H1 (cell line): ENCODE measurements at regions of chr6 and their contacts with region 1.

Region 1: DNA sequence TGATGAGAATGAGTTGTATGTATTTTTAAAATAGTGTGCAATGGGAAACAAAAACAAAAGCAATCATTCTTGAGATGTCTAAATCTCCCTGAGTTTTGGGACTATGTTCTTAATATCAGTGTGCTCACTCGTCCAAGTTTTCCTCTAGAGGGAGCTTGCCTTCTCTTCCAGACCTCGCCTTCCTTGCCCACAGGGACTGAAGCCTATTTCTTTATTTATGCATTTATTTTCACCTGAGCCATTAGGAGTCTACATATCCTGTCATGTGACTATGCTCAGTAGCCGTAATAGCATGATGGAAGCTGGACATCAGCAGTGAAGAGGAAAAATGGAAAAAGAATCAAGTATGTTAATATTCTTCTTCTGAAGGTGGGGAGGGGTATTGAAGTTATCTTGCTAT is 131.2 kb downstream of the SH3BGRL2 start:
- DNase-seq: no peak
- H3K4me3 ChIP-seq: no peak overlapping the region
- H3K27ac ChIP-seq: no peak overlapping the region
- H3K4me1 ChIP-seq: no peaks in the 10 kb centered on the region; a peak in 1 of 7 replicates
- H3K27me3 ChIP-seq: no peaks in the 10 kb centered on the region
- CTCF ChIP-seq: peak; percentile 20 to 60 (median 32); a peak in 3 of 4 replicates
- EP300 ChIP-seq: no peak
- POLR2A ChIP-seq: no peak
- RAD21 ChIP-seq: peak; percentile 36 to 47; a peak in 3 of 4 replicates

Region 2: DNA sequence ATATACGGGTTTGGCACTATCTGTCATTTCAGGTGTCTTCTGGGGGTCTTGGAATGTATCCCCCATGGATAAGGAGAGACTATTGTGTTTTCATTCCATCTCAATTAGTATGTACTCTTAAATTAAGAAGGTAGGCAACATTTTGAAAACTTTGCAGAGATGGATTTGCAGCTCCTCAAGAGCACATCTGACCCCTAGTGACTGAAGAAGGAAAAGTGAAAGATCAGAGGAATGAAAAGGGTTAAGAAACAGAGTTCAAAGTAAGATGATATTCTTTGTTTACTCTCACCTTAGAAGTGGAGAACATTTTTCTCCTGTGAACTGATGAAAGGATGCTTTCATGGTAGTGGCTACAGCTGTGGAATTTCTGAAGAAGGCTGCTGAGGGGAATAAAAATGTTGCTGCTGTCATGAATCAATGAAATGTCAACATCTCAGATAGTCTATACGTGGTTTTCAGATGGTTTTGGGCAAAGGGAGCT is 89.7 kb before region 1 on chr6:
- CTCF ChIA-PET with region 1: interaction called, 10 read pairs
- POLR2A ChIA-PET with region 1: no interaction called
- DNase-seq: no peak
- H3K4me3 ChIP-seq: no peak overlapping the region
- H3K27ac ChIP-seq: no peak overlapping the region
- H3K4me1 ChIP-seq: peaks cover 0 to 5% (median 4%) of the 10 kb centered on the region in 4 experiments; a peak in 5 of 7 replicates
- H3K27me3 ChIP-seq: no peaks in the 10 kb centered on the region
- CTCF ChIP-seq: peak in 2 of 3 experiments; percentile 37 to 62; a peak in 2 of 4 replicates
- EP300 ChIP-seq: no peak
- POLR2A ChIP-seq: no peak
- RAD21 ChIP-seq: peak; percentile 80 to 83

Region 3: DNA sequence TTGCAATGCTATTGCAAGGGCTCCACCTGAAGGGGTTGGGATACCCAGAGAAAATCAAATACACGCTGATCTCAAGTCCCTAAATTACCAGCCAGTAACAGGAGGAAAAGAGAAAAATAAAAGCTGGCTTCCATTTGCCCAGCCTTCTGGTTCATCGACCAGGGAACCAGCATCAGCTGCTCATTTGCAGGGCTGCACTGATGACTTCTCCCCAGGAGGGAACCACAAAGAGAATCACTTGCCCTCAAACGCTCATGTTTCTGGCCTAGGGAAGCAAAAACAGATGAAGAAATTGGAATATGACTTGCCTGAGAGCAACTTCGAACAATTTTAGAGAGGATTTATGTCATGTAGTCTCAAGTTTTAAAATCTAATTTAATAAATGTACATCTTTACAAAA is 11.6 kb before region 1 on chr6:
- CTCF ChIA-PET with region 1: interaction called, 13 read pairs
- POLR2A ChIA-PET with region 1: interaction called, 3 read pairs
- DNase-seq: no peak
- H3K4me3 ChIP-seq: no peak overlapping the region
- H3K27ac ChIP-seq: no peak overlapping the region
- H3K4me1 ChIP-seq: no peaks in the 10 kb centered on the region
- H3K27me3 ChIP-seq: no peaks in the 10 kb centered on the region
- CTCF ChIP-seq: no peak
- EP300 ChIP-seq: no peak
- POLR2A ChIP-seq: no peak
- RAD21 ChIP-seq: no peak

Region 4: GRCh38 chr6:79777713-79778579 is 15.6 kb after region 1 on chr6:
- CTCF ChIA-PET with region 1: interaction called, 72 read pairs
- POLR2A ChIA-PET with region 1: no interaction called
- DNase-seq: peak; percentile 70 to 98
- H3K4me3 ChIP-seq: peak overlapping the region in 1 of 4 experiments; percentile 48; a peak in 4 of 8 replicates
- H3K27ac ChIP-seq: no peak overlapping the region
- H3K4me1 ChIP-seq: peaks cover 0 to 3% (median 1%) of the 10 kb centered on the region in 4 experiments; a peak in 1 of 7 replicates
- H3K27me3 ChIP-seq: no peaks in the 10 kb centered on the region
- CTCF ChIP-seq: peak; percentile 94 to 96 (median 94)
- EP300 ChIP-seq: no peak
- POLR2A ChIP-seq: no peak
- RAD21 ChIP-seq: peak; percentile 82 to 87

Region 5: DNA sequence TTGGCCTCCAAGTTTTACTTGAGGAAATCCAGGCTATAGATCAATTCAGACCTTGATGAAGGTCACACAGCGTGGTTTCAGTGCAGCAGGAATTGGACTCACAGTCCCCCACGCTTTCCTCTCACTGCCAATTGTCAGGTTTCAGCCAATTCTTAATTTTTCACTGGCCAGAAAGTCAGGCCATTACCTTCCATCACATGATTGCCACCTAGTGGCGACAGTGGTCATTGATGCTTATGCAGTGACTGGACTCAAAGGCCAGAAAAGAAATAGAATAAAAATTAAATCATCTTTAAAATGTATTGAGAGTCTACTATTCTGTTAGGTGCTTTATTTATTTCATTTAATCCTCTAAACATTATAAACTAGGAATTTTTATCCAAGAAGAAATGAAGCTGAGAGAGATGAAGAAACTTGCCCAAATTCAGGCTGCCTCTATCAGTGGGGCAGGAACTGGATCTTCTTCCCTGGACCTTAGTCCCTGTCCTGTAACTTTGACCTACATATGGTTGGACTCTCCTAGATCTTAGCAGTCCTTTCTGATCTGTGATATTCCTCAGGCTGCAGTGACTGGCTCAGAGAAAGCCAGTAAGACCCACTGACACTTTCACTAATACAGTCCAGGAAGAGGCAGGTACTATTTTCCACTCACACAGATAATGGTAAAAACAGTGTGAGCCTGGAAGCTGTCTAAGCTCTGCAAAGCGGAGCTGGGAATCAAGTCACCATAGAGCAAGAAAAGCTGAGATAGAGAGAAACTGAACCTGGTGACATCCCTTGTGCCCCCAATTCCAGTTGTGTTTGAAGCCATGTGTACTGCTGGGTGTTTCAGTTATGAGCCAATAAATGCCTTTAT is 51.7 kb after region 1 on chr6:
- CTCF ChIA-PET with region 1: interaction called, 11 read pairs
- POLR2A ChIA-PET with region 1: no interaction called
- DNase-seq: peak; percentile 7 to 80
- H3K4me3 ChIP-seq: no peak overlapping the region
- H3K27ac ChIP-seq: no peak overlapping the region
- H3K4me1 ChIP-seq: peaks cover 0 to 7% (median 4%) of the 10 kb centered on the region in 4 experiments; a peak in 3 of 7 replicates
- H3K27me3 ChIP-seq: no peaks in the 10 kb centered on the region
- CTCF ChIP-seq: peak; percentile 27 to 83 (median 81)
- EP300 ChIP-seq: no peak
- POLR2A ChIP-seq: no peak
- RAD21 ChIP-seq: peak; percentile 78 to 85

Region 6: DNA sequence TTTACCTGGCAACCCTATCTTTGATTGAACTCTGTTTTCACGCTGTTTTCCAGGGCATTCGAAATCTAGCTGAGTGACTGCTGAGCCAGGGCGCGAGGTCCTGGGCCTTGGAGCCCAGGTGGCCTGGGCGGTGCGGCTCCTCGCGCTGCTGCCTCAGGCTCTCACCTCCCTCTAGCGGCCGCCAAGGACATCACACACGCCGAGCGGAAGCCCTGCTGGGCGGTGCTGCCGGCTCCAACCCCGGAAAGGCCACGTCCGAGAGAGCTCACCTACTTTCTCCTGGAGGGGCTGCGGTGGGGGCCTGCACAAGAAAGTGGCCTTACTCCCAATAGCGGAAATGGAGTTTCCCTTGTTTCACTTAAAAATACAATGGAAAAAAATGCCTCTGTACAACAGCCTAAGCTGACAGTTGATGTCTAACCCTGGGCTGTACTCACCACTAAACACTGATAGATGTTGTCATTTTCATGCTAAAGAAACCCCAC is 107.3 kb after region 1 on chr6:
- CTCF ChIA-PET with region 1: interaction called, 25 read pairs
- POLR2A ChIA-PET with region 1: no interaction called
- DNase-seq: peak; percentile 59 to 92
- H3K4me3 ChIP-seq: peak overlapping the region in 1 of 4 experiments; percentile 26; a peak in 1 of 8 replicates
- H3K27ac ChIP-seq: no peak overlapping the region
- H3K4me1 ChIP-seq: peaks cover 2 to 4% (median 4%) of the 10 kb centered on the region in 4 experiments; a peak in 4 of 7 replicates
- H3K27me3 ChIP-seq: peaks cover 0 to 3% (median 0%) of the 10 kb centered on the region in 4 experiments; a peak in 1 of 7 replicates
- CTCF ChIP-seq: peak; percentile 86 to 94 (median 92)
- EP300 ChIP-seq: no peak
- POLR2A ChIP-seq: no peak
- RAD21 ChIP-seq: peak; percentile 70 to 82